ENCODE measurements at regions of chr4 and their contacts with region 1.

Region 1: GRCh38 chr4:30863021-30863420 is 142.9 kb downstream of the PCDH7 start:
- DNase-seq: no peak
- H3K4me3 ChIP-seq: no peak overlapping the region
- H3K27ac ChIP-seq: no peak overlapping the region
- H3K4me1 ChIP-seq: peaks cover 25% of the 10 kb centered on the region
- H3K27me3 ChIP-seq: no peaks in the 10 kb centered on the region
- CTCF ChIP-seq: no peak

Region 2: DNA sequence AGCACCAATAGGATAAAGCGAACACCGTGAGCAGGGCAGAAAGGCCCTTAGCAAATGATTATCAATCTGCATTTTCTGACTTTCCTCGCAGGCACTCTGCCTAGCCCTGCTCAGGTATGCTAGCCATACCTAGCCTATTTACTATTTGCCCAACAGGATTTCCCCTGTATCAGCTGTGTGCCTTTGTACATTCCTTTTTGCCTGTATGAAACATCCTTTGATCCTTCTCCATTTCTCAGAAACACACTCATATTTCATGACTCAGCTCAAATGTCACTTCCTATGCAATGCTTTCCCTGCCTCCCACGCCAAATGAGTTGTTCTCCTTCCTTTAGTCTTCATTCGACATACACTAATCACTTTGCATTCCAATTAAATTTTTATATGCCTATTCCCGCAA is 105.7 kb before region 1 on chr4:
- CTCF ChIA-PET with region 1: no interaction called
- POLR2A ChIA-PET with region 1: no interaction called
- intact Hi-C with region 1: loop called (anchors 10 kb)
- DNase-seq: peak; percentile 52 to 89
- H3K4me3 ChIP-seq: peak overlapping the region; percentile 4; the same call in 1 of the 2 replicates
- H3K27ac ChIP-seq: peak overlapping the region; percentile 83
- H3K4me1 ChIP-seq: peaks cover 44% of the 10 kb centered on the region
- H3K27me3 ChIP-seq: no peaks in the 10 kb centered on the region
- CTCF ChIP-seq: no peak

Region 3: GRCh38 chr4:30770049-30770549 is 92.9 kb before region 1 on chr4:
- CTCF ChIA-PET with region 1: no interaction called
- POLR2A ChIA-PET with region 1: no interaction called
- intact Hi-C with region 1: loop called (anchors 1 kb)
- DNase-seq: peak; percentile 30 to 95
- H3K4me3 ChIP-seq: peak overlapping the region; percentile 34; the same call in 1 of the 2 replicates
- H3K27ac ChIP-seq: peak overlapping the region; percentile 86
- H3K4me1 ChIP-seq: peaks cover 36% of the 10 kb centered on the region
- H3K27me3 ChIP-seq: no peaks in the 10 kb centered on the region
- CTCF ChIP-seq: no peak

Region 4: DNA sequence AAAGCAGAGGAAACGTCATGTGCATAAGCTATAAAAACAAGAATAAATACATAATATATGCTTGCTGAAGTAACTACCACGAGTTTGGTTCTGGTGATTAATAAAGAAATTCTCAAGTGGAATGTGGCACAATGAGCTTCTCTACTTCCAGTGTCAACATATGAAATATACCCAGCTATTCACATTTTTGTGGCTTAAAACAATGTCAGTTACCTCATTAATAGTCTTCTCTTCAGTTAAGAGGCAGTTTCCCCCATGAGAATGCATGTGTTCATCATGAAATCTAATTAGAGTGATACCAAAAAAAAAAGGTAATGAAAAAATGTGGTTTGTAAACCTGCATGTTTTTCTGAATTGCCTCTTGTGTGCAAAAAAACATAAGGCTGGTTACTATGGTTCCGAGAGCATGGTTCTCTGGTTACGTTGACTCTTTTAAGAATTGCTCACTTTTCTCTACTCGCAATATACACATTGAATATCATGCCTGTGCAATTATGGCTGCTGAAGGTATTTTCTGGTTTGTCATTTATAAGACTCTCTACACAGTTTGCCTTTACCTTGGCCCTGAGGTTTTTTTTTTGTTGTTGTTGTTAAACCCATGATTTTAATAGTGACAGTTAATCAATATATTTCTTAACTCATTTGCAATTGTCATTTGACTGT is 34.6 kb before region 1 on chr4:
- CTCF ChIA-PET with region 1: no interaction called
- POLR2A ChIA-PET with region 1: no interaction called
- intact Hi-C with region 1: loop called (anchors 5 kb)
- DNase-seq: peak in 1 of 2 experiments; percentile 58
- H3K4me3 ChIP-seq: no peak overlapping the region
- H3K27ac ChIP-seq: no peak overlapping the region
- H3K4me1 ChIP-seq: 0 out of 2 replicates have a peak, but pooled peaks cover 3% of the 10 kb centered on the region
- H3K27me3 ChIP-seq: no peaks in the 10 kb centered on the region
- CTCF ChIP-seq: no peak

Region 5: GRCh38 chr4:30989508-30989907 is 126.5 kb after region 1 on chr4:
- CTCF ChIA-PET with region 1: no interaction called
- POLR2A ChIA-PET with region 1: no interaction called
- intact Hi-C with region 1: no loop called
- DNase-seq: no peak
- H3K4me3 ChIP-seq: no peak overlapping the region
- H3K27ac ChIP-seq: no peak overlapping the region
- H3K4me1 ChIP-seq: no peaks in the 10 kb centered on the region
- H3K27me3 ChIP-seq: no peaks in the 10 kb centered on the region
- CTCF ChIP-seq: no peak